MCF 10A (cell line): ENCODE measurements at regions of chr13 and their contacts with region 1.

Region 1: GRCh38 chr13:50170447-50171037 is 155.3 kb downstream of the KCNRG start:
- DNase-seq: peak; percentile 42
- H3K4me3 Mint-ChIP-seq: no peak overlapping the region
- H3K27ac Mint-ChIP-seq: no peak overlapping the region
- H3K4me1 Mint-ChIP-seq: no peaks in the 10 kb centered on the region
- H3K27me3 Mint-ChIP-seq: no peaks in the 10 kb centered on the region
- CTCF ChIP-seq: peak; percentile 36

Region 2: GRCh38 chr13:50208826-50209335 is 38.3 kb after region 1 on chr13:
- CTCF ChIA-PET with region 1: no interaction called
- POLR2A ChIA-PET with region 1: no interaction called
- intact Hi-C with region 1: no loop called
- DNase-seq: peak; percentile 57
- H3K4me3 Mint-ChIP-seq: peak overlapping the region; percentile 70
- H3K27ac Mint-ChIP-seq: peak overlapping the region; percentile 91
- H3K4me1 Mint-ChIP-seq: peaks cover 16% of the 10 kb centered on the region
- H3K27me3 Mint-ChIP-seq: no peaks in the 10 kb centered on the region
- CTCF ChIP-seq: no peak

Region 3: GRCh38 chr13:50370303-50370950 is 199.9 kb after region 1 on chr13:
- CTCF ChIA-PET with region 1: no interaction called
- POLR2A ChIA-PET with region 1: no interaction called
- intact Hi-C with region 1: loop called (anchors 10 kb)
- DNase-seq: no peak
- H3K4me3 Mint-ChIP-seq: no peak overlapping the region
- H3K27ac Mint-ChIP-seq: no peak overlapping the region
- H3K4me1 Mint-ChIP-seq: peaks cover 15% of the 10 kb centered on the region
- H3K27me3 Mint-ChIP-seq: no peaks in the 10 kb centered on the region
- CTCF ChIP-seq: no peak